ENCODE measurements at regions of chr7 and their contacts with region 1.

Region 1: DNA sequence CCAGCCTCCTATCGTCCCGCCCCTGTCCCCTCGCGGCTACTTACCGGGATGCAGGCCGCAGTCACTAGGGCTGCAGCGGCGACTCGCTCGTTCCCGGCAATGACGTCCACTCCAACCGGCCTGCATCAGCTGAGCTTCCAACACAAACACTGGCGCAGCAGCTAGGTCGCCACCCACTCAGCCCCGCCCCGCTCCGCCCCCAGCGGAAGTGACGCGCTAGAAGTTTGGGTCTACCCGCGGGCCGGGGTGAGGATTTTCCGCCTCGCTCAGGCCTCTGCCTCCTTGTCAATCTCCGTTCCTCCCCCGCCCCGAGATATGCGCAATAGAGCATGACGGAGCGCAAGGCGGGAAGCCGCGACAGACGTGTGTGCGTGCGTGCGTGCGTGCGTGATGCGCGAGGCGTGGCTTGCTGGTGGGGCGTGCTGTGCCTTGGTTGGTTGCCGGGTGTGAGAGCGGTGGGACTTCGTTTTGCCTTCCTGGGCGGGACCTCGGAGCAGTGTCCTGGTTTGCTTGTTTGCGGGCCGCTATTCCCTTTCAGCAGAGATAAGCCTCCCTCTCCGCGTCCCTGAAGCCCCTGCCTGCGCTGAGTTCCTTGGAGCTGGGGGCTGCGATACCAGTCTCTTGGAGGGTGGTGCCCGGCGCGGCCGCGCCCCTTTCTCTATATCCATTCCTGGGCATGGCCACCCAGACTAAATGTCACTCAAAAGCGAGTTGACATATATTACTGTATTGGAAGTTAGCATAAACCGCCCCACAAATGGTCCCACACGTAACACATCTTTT is at the start of gene PNPLA8:
- DNase-seq: peak; percentile 99 to 100
- H3K4me3 ChIP-seq: peak within 1 kb of the TSS; percentile 74
- H3K4me3 Mint-ChIP-seq: peak within 1 kb of the TSS; percentile 98
- H3K27ac Mint-ChIP-seq: peak within 1 kb of the TSS; percentile 91
- H3K4me1 ChIP-seq: peaks cover 25% of the 10 kb centered on the region
- H3K4me1 Mint-ChIP-seq: peaks cover 36% of the 10 kb centered on the region
- H3K27me3 ChIP-seq: no peaks in the 10 kb centered on the region
- H3K27me3 Mint-ChIP-seq: no peaks in the 10 kb centered on the region
- CTCF ChIP-seq: no peak
- total RNA-seq, gene PNPLA8: 15.3 and 16.5 TPM in 2 replicates

Region 2: DNA sequence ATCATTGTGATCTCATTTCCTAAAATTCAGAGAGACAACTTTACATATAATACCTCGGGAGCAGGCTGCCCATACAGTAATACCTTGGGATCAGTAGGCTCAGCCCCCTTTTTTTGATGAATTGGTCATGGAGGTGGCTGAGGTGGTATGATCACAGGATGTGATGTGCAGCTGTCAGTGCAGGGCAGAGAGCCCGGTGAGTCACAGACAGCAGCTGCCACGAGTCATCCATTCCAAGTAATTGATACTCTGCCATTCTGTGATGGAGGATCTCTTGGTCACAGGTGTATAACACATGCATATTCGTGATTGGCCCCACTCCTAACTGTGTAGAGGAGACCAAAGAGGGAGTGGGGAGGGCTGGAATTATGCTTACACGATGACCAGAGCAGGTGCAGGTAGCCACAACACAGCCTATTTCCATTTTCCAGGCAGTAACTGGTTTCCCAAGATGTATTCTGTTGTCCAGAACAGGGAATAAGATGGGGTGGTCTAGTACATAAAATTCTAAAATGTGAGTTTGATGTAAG is 84.1 kb before region 1 on chr7:
- CTCF ChIA-PET with region 1: no interaction called
- POLR2A ChIA-PET with region 1: interaction called, 13 read pairs
- intact Hi-C with region 1: no loop called
- DNase-seq: no peak
- H3K4me3 ChIP-seq: no peak overlapping the region
- H3K4me3 Mint-ChIP-seq: no peak overlapping the region
- H3K27ac Mint-ChIP-seq: no peak overlapping the region
- H3K4me1 ChIP-seq: peaks cover 45% of the 10 kb centered on the region
- H3K4me1 Mint-ChIP-seq: peaks cover 31% of the 10 kb centered on the region
- H3K27me3 ChIP-seq: no peaks in the 10 kb centered on the region
- H3K27me3 Mint-ChIP-seq: no peaks in the 10 kb centered on the region
- CTCF ChIP-seq: no peak

Region 3: DNA sequence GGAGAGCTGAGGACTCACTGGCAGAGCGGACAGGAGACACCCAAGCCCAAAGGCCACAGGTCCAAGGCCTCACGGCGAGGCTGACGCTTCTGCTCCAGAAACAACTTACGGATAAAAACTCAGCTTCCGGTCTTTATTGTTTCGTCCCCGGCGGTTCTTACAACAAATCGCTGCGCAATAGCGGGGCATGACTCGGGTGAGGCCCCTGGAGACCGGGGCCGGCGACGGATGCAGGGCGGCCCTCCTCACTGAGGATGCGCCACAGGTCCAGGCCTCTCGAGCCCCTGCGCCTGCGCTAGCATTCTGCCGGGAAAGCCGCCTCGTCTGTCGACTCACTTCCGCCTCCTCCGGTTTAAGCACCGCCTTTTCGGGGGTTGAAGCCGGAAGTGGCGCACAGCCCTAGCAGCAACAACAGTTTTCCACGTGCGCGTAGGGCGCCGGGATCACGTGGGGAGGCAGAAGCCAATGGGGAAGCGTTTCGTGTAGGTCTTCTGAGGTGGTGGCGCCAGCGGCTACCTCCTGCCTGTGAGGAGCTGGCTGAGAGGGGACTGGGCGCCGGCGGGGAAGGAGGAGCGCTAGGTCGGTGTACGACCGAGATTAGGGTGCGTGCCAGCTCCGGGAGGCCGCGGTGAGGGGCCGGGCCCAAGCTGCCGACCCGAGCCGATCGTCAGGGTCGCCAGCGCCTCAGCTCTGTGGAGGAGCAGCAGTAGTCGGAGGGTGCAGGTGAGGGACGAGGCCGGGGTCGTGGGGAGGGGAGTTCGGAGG is 43.4 kb after region 1 on chr7 and contains the starts of genes DNAJB9 and THAP5:
- CTCF ChIA-PET with region 1: interaction called, 3 read pairs
- POLR2A ChIA-PET with region 1: interaction called, 28 read pairs
- intact Hi-C with region 1: loop called (anchors 1 kb)
- DNase-seq: peak; percentile 99 to 100
- H3K4me3 ChIP-seq: peak within 1 kb of the TSS; percentile 93
- H3K4me3 Mint-ChIP-seq: peak within 1 kb of the TSS; percentile 98
- H3K27ac Mint-ChIP-seq: peak within 1 kb of the TSS; percentile 98
- H3K4me1 ChIP-seq: no peaks in the 10 kb centered on the region; the same call in 1 of the 2 replicates
- H3K4me1 Mint-ChIP-seq: no peaks in the 10 kb centered on the region
- H3K27me3 ChIP-seq: no peaks in the 10 kb centered on the region
- H3K27me3 Mint-ChIP-seq: no peaks in the 10 kb centered on the region
- CTCF ChIP-seq: no peak
- total RNA-seq, gene DNAJB9: 22.0 and 22.1 TPM in 2 replicates
- total RNA-seq, gene THAP5: 18.3 and 20.4 TPM in 2 replicates

Region 4: GRCh38 chr7:108581639-108582491 is 55.7 kb after region 1 on chr7:
- CTCF ChIA-PET with region 1: no interaction called
- POLR2A ChIA-PET with region 1: interaction called, 8 read pairs
- intact Hi-C with region 1: loop called (anchors 1 kb)
- DNase-seq: peak; percentile 82 to 89
- H3K4me3 ChIP-seq: no peak overlapping the region
- H3K4me3 Mint-ChIP-seq: peak overlapping the region; percentile 44
- H3K27ac Mint-ChIP-seq: peak overlapping the region; percentile 97
- H3K4me1 ChIP-seq: peaks cover 26% of the 10 kb centered on the region
- H3K4me1 Mint-ChIP-seq: peaks cover 36% of the 10 kb centered on the region
- H3K27me3 ChIP-seq: no peaks in the 10 kb centered on the region
- H3K27me3 Mint-ChIP-seq: no peaks in the 10 kb centered on the region
- CTCF ChIP-seq: no peak

Region 5: GRCh38 chr7:108592646-108593201 is 66.5 kb after region 1 on chr7:
- CTCF ChIA-PET with region 1: no interaction called
- POLR2A ChIA-PET with region 1: interaction called, 3 read pairs
- intact Hi-C with region 1: loop called (anchors 1 kb)
- DNase-seq: peak; percentile 61 to 69
- H3K4me3 ChIP-seq: no peak overlapping the region
- H3K4me3 Mint-ChIP-seq: no peak overlapping the region
- H3K27ac Mint-ChIP-seq: no peak overlapping the region
- H3K4me1 ChIP-seq: peaks cover 20% of the 10 kb centered on the region
- H3K4me1 Mint-ChIP-seq: peaks cover 19% of the 10 kb centered on the region
- H3K27me3 ChIP-seq: no peaks in the 10 kb centered on the region
- H3K27me3 Mint-ChIP-seq: no peaks in the 10 kb centered on the region
- CTCF ChIP-seq: peak; percentile 45 to 71

Region 6: DNA sequence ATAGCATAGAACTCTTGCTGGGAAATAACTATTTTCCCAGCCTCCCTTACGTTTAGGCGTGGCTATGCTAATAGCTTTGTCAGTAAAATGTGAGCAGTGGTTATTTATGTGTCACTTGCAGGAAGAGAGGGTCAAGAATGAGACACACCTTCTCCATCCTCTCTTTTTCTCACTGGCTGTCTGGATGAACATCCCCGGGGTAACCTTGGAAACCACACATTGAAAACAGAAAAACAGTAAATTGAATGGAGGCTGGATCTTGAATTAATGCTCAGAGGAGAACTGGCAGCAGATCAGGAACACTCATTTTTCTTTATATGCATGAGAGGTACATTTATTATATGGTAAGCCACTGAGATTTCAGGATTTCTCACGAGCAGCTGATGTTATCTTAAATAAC is 171.1 kb after region 1 on chr7:
- CTCF ChIA-PET with region 1: no interaction called
- POLR2A ChIA-PET with region 1: no interaction called
- intact Hi-C with region 1: no loop called
- DNase-seq: no peak
- H3K4me3 ChIP-seq: no peak overlapping the region
- H3K4me3 Mint-ChIP-seq: no peak overlapping the region
- H3K27ac Mint-ChIP-seq: no peak overlapping the region
- H3K4me1 ChIP-seq: peaks cover 11% of the 10 kb centered on the region
- H3K4me1 Mint-ChIP-seq: no peaks in the 10 kb centered on the region
- H3K27me3 ChIP-seq: no peaks in the 10 kb centered on the region
- H3K27me3 Mint-ChIP-seq: no peaks in the 10 kb centered on the region
- CTCF ChIP-seq: no peak

Region 7: DNA sequence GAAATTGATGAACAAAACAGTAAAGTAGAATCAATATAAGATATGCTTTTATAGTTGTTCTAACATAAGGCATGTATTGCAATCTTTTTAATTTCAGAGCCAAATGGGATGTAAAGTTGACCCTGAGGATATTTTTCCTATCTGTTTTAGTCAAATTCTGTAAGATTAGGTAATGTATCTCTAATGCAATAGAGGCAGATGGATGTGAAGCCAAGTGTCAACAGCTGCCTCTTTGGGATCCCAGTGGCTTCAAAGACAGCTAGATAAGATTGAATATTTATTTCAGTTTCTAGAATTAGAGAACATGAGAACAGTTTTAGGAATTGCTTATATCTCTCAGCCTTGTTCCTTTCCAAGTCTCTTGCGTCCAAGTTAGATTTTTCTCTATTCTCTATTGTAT is 251.8 kb after region 1 on chr7:
- CTCF ChIA-PET with region 1: no interaction called
- POLR2A ChIA-PET with region 1: no interaction called
- intact Hi-C with region 1: no loop called
- DNase-seq: no peak
- H3K4me3 ChIP-seq: no peak overlapping the region
- H3K4me3 Mint-ChIP-seq: no peak overlapping the region
- H3K27ac Mint-ChIP-seq: no peak overlapping the region
- H3K4me1 ChIP-seq: no peaks in the 10 kb centered on the region
- H3K4me1 Mint-ChIP-seq: no peaks in the 10 kb centered on the region
- H3K27me3 ChIP-seq: no peaks in the 10 kb centered on the region
- H3K27me3 Mint-ChIP-seq: no peaks in the 10 kb centered on the region
- CTCF ChIP-seq: no peak

Measured in Caco-2 (cell line).